Mammary epithelial cell (primary cell): ENCODE measurements at regions of chr5 and their contacts with region 1.

Region 1: DNA sequence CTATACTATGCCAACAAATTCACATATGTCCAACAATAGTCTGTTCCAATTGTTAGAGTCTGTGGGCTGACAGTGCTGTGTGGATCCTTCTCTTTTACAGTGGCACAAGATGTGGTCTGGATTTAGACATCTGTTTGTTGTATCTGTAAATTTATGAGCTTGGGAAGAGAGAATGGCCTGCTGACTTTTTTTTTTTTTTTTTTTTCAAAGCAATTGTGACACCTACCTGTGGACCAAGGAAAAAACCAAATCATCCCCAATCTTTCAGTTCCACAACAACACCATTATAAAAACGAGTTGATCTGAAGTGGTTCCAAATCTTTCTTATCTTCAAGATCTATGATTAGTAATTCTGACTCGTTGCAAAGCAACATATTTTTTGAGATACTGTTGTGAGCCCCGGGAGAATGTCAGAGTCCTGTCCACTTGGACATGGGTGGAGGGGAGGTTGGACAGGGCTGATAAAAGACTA is 4.9 kb downstream of the IRX2 start:
- DNase-seq: peak; percentile 84
- H3K4me3 ChIP-seq: peak overlapping the region; percentile 30 to 94 (median 78)
- H3K27ac ChIP-seq: peak overlapping the region; percentile 81
- H3K4me1 ChIP-seq: peaks cover 33% of the 10 kb centered on the region
- H3K27me3 ChIP-seq: no peaks in the 10 kb centered on the region
- CTCF ChIP-seq: peak; percentile 2 to 30

Region 2: DNA sequence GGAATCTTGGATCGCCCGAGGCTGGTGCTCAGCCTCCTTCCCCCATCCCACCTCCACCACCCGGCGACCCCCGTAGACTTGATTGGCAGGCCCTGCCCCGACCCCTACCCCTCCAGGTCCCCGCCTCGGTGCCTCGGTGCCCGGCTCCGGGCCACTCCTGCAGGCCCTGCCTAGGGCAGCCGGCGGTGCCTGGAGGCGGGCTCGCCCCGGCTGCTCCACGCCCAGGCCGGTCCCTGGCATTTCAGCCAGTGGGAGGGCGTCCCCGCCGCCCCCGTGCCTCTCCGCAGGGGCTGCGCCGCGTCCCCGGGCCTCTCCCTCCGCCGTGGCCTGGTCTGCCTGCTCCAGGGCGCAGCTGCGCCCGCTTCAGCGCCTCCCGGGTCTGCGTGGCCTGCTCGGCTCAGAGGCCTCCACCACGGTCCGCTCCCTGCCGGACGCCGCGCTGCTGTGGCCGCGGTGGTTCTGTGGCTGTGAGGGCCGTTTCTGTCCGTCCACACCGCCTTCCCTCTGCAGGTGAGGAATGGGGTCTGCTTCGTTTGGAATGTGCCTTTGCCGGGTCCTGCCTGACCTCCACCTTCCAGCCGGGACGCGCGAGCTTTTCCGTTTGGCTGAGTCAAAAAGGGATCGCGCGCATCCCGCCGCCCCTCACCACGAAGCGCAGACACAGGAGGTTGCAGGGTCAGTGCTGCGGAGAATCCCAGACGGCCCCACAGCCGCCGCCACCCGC is 815.6 kb before region 1 on chr5:
- CTCF ChIA-PET with region 1: no interaction called
- dilution Hi-C with region 1: no loop called
- in situ Hi-C with region 1: no loop called
- intact Hi-C with region 1: loop called (anchors 5 kb)
- DNase-seq: peak; percentile 64
- H3K4me3 ChIP-seq: peak overlapping the region; percentile 48 to 71 (median 66)
- H3K27ac ChIP-seq: peak overlapping the region; percentile 75
- H3K4me1 ChIP-seq: peaks cover 40% of the 10 kb centered on the region
- H3K27me3 ChIP-seq: no peaks in the 10 kb centered on the region
- CTCF ChIP-seq: no peak

Region 3: DNA sequence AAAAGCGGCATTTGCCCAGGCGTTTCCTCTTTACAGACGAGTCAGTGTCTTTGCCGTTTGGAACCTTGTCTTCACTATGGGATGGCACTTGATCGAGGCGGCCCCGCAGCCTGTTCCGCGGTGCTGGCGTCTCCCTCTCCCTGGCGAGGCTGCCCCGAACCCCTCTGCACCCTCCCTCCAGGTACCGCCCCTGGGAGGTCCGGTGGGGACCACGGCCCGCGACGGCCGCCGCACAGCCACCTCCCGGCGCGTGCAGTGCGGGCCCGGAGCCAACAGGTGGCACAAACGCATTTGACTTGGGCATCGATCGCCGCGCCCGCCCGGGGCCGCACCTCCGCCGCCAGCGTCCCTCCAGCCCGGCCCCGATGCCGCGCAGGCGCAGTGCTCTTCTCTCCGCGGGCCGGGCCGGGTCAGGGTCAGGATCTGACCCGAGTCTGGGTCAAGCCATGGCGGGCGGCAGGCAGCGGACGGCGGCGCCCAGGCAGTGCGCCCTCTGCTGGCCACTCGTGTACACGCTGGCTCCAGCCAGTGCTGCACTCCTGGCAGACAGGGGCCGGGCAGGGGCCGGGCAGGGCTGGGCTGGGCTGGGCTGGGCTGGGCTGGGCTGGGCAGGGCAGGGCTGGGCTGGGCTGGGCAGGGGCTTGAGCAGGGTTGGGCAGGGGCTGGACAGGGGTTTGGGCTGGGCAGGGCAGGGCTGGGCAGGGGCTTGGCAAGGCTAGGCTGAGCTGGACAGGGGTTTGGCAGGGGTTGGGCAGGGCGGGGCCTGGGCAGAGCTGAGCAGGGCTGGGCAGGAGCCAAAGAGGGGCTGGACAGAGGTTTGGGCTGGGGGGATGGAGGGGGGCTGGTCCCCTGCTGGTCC is 708.0 kb before region 1 on chr5:
- CTCF ChIA-PET with region 1: no interaction called
- dilution Hi-C with region 1: no loop called
- in situ Hi-C with region 1: no loop called
- intact Hi-C with region 1: loop called (anchors 2 kb)
- DNase-seq: peak; percentile 42
- H3K4me3 ChIP-seq: peak overlapping the region; percentile 53 to 58 (median 57)
- H3K27ac ChIP-seq: no peak overlapping the region
- H3K4me1 ChIP-seq: peaks cover 12% of the 10 kb centered on the region
- H3K27me3 ChIP-seq: no peaks in the 10 kb centered on the region
- CTCF ChIP-seq: peak; percentile 59 to 72

Region 4: DNA sequence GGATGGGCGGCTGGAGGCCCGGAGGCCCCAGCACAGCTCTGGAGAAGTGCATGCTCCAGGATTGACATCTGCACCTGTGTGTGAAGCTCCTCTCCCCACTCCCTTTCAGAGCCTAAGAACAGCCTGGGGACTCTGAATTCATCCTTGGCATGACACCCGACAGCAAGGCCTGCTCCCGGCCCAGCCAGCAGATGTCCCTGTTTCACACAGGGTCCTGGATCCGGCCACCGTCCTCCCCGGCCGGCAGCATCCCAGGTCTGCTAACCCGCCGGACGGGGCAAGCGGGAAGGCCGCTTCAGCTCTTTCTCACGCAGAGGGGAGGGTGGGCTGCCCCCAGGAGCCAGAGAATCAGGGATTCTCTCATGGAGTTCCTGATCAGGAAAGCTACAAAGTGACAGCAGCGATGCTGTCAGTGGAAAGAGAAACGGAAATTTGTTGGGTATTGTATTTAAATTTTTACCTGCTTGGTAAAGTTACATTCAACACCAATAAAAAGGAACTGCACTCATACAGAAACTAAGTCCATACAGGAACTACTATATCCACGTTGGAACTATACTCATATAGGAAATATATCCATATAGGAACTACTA is 538.5 kb before region 1 on chr5:
- CTCF ChIA-PET with region 1: no interaction called
- dilution Hi-C with region 1: no loop called
- in situ Hi-C with region 1: no loop called
- intact Hi-C with region 1: loop called (anchors 2 kb)
- DNase-seq: peak; percentile 8
- H3K4me3 ChIP-seq: no peak overlapping the region
- H3K27ac ChIP-seq: no peak overlapping the region
- H3K4me1 ChIP-seq: no peaks in the 10 kb centered on the region
- H3K27me3 ChIP-seq: no peaks in the 10 kb centered on the region
- CTCF ChIP-seq: peak in 1 of 2 donors; percentile 43

Region 5: DNA sequence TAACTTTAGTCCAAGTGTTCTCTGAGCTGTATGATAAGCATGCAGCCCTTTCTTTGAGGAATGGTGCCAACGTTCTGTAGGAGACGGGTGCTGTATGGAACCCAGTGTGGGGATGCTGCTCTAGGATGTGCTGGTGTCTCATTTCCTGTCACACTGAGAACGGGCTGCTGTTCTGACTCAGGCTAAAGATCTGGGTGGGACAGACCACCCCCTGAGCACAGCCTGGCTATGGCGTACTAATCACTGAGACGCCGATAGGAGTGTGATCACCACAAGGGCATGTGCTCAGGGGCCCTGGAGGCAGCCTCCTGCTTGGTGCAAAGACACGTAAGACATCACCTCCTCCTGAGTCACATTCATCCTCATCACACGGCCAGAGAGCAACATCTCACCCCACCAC is 235.5 kb before region 1 on chr5:
- CTCF ChIA-PET with region 1: no interaction called
- dilution Hi-C with region 1: no loop called
- in situ Hi-C with region 1: no loop called
- intact Hi-C with region 1: no loop called
- DNase-seq: no peak
- H3K4me3 ChIP-seq: no peak overlapping the region
- H3K27ac ChIP-seq: no peak overlapping the region
- H3K4me1 ChIP-seq: no peaks in the 10 kb centered on the region
- H3K27me3 ChIP-seq: no peaks in the 10 kb centered on the region
- CTCF ChIP-seq: no peak

Region 6: GRCh38 chr5:2656206-2656605 is 90.4 kb before region 1 on chr5:
- CTCF ChIA-PET with region 1: no interaction called
- dilution Hi-C with region 1: no loop called
- in situ Hi-C with region 1: no loop called
- intact Hi-C with region 1: no loop called
- DNase-seq: peak; percentile 46
- H3K4me3 ChIP-seq: no peak overlapping the region
- H3K27ac ChIP-seq: no peak overlapping the region
- H3K4me1 ChIP-seq: peaks cover 14% of the 10 kb centered on the region
- H3K27me3 ChIP-seq: no peaks in the 10 kb centered on the region
- CTCF ChIP-seq: no peak

Region 7: DNA sequence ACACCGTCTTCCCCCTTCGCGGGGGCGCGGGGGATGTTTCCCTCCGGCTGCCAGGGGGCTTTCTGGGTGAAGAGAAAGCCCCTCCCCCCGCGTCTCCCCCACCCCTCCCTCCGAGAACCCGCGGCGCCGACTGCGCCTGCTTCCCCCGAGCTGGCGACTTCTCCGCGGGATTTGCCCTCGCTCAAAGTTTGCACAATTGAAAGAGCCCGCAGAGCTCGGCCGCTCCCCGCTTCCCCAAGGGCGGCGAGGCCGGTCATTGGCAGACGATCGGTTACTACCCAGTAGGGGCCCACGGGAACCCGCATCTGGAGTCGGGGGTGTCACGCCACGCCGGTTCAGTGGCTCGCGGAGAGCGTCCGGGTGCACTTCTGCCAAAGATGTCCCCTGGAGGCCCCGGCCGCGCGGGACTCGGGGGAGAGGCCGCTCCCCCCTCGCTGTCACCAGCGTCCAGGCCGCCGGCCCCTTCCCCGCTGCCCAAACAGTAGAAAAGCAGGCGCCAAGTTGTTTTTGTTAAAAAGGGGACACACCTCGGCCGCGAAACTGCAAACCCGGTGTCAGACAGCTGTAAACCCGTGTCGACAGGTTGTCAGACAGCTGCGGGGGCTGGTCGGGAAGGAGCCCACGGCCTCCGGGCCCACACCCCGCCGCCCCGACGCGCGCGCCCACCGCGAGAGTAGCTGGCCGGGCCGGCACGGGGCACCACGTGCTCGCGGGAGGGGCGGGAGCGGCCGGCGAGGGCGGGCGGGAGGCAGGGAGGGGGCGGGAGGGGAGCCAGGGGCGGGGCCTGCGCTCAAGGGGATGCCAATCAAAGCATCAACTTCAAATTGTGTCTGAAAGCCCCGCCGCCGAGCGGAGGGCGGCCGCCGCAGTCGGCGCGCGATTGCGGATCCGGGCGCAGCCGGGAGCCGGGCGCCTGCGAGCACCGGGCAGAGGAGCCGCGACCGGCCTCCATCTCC is 848.7 kb after region 1 on chr5 and contains the start of gene IRX1:
- CTCF ChIA-PET with region 1: no interaction called
- dilution Hi-C with region 1: no loop called
- in situ Hi-C with region 1: loop called (anchors 5 kb)
- intact Hi-C with region 1: no loop called
- DNase-seq: peak; percentile 73
- H3K4me3 ChIP-seq: peak within 1 kb of the TSS; percentile 82 to 100 (median 97)
- H3K27ac ChIP-seq: peak within 1 kb of the TSS; percentile 96
- H3K4me1 ChIP-seq: peaks cover 14% of the 10 kb centered on the region
- H3K27me3 ChIP-seq: no peaks in the 10 kb centered on the region
- CTCF ChIP-seq: no peak
- total RNA-seq, gene IRX1: 29.8 to 200 TPM

Region 8: DNA sequence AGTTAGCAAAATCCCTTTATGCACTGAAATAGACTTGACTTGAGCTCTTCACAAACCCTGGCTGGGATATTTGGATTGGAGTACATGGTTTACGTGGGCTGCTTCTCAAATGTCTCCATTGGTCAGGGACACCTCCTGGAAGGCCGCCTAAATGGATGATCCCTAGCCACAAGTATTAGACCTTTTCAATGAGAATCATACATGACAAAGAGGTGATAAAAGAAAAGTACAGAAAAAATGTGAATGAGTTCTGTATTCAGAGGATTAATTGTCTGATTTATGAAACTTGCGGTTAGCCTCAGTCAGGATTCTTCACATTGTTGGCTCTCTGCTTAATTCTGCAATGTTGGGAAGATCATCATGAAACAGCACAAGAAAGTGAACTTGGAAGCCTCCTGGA is 1640.7 kb after region 1 on chr5:
- CTCF ChIA-PET with region 1: no interaction called
- dilution Hi-C with region 1: no loop called
- in situ Hi-C with region 1: no loop called
- intact Hi-C with region 1: loop called (anchors 5 kb)
- DNase-seq: peak; percentile 98
- H3K4me3 ChIP-seq: no peak overlapping the region
- H3K27ac ChIP-seq: peak overlapping the region; percentile 82
- H3K4me1 ChIP-seq: peaks cover 16% of the 10 kb centered on the region
- H3K27me3 ChIP-seq: no peaks in the 10 kb centered on the region
- CTCF ChIP-seq: no peak

Region 9: DNA sequence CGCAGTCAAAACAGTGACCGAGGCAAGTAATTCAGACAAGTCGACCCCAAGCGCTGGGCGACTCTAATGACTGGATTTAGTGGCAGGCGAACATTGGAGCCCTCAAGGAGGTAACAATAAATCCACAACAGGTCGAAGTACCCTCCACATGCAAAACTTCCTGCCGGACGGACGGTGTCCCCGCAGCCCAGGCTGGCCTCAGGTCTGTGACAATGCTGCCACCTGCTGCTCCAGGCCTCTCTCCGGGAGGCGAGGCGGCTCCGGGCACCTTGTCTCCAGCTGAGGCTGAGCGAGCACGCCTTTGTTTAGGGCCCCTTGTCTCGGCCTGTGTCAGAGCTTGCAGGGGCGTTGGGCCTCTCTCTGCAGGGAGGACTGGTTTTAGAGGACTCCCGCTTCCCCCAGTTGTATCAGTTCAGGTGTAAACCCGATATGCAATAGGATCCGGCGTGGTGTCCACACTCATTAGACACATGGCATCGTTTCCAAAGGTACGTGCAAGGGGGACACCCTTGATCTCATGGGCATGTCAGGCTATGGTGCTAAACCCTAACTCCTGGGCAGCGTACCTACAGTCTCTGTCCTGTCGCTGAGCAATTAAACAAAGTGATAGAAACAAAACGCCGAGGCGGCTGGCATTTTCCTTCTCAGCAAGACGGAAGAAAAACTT is 1765.5 kb after region 1 on chr5:
- CTCF ChIA-PET with region 1: no interaction called
- dilution Hi-C with region 1: no loop called
- in situ Hi-C with region 1: no loop called
- intact Hi-C with region 1: loop called (anchors 5 kb)
- DNase-seq: peak; percentile 65
- H3K4me3 ChIP-seq: peak overlapping the region; percentile 6 to 31 (median 28)
- H3K27ac ChIP-seq: peak overlapping the region; percentile 34
- H3K4me1 ChIP-seq: peaks cover 56% of the 10 kb centered on the region
- H3K27me3 ChIP-seq: no peaks in the 10 kb centered on the region
- CTCF ChIP-seq: peak; percentile 72 to 89